ENCODE measurements at regions of chr2 and their contacts with region 1.

Region 1: GRCh38 chr2:218406209-218406948 is 6.7 kb downstream of the CTDSP1 start:
- DNase-seq: peak; percentile 97 to 99
- ATAC-seq: peak; percentile 86 to 92 (median 88)
- H3K4me3 ChIP-seq: peak overlapping the region; percentile 19 to 63 (median 50)
- H3K27ac ChIP-seq: peak overlapping the region; percentile 81 to 95 (median 92)
- H3K4me1 ChIP-seq: peaks cover 27 to 63% (median 50%) of the 10 kb centered on the region in 9 donors
- H3K27me3 ChIP-seq: no peaks in the 10 kb centered on the region
- CTCF ChIP-seq: peak; percentile 55 to 88 (median 78)

Region 2: DNA sequence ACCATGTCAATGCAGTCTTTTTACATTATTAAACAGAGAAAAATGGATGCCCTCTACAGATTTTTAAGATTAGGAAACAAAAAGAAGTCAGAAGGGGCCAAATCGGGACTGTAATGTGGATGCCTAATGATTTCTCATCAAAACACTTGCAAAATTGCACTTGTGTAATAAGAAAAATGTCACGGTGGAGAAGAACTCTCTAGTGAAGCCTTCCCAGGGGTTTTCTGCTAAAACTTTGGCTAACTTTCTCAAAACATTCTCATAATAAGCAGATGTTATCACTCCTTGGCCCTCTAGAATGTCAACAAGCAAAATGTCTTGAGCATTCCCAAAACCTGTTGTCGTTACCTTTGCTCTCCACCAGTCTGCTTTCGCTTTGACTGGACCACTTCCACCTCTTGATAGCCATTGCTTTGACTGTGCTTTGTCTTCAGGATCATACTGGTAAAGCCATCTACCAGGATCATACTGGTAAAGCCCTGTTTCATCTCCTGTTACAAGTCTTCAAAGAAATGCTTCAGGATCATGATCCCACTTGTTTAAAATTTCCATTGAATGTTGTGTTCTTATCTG is 630.4 kb before region 1 on chr2:
- intact Hi-C with region 1: no loop called
- DNase-seq: no peak
- ATAC-seq: no peak
- H3K4me3 ChIP-seq: no peak overlapping the region
- H3K27ac ChIP-seq: no peak overlapping the region
- H3K4me1 ChIP-seq: no peaks in the 10 kb centered on the region
- H3K27me3 ChIP-seq: no peaks in the 10 kb centered on the region
- CTCF ChIP-seq: no peak

Region 3: GRCh38 chr2:218466016-218466521 is 59.7 kb after region 1 on chr2:
- intact Hi-C with region 1: loop called in 8 of 10 experiments (anchors 2 to 5 kb)
- DNase-seq: no peak
- ATAC-seq: peak in 3 of 8 donors; percentile 37 to 53 (median 44)
- H3K4me3 ChIP-seq: no peak overlapping the region
- H3K27ac ChIP-seq: no peak overlapping the region
- H3K4me1 ChIP-seq: peaks cover 0 to 8% (median 0%) of the 10 kb centered on the region in 9 donors
- H3K27me3 ChIP-seq: no peaks in the 10 kb centered on the region
- CTCF ChIP-seq: peak in 8 of 9 donors; percentile 30 to 68 (median 60)

Region 4: GRCh38 chr2:218568190-218569037 is 162.0 kb after region 1 on chr2 and contains the starts of genes CNOT9 and USP37:
- intact Hi-C with region 1: loop called in 1 of 10 experiments (anchors 2 kb)
- DNase-seq: peak; percentile 100
- ATAC-seq: peak; percentile 97 to 99 (median 98)
- H3K4me3 ChIP-seq: peak within 1 kb of the TSS; percentile 61 to 96 (median 84)
- H3K27ac ChIP-seq: peak within 1 kb of the TSS; percentile 68 to 97 (median 94)
- H3K4me1 ChIP-seq: peaks cover 8 to 49% (median 45%) of the 10 kb centered on the region in 9 donors
- H3K27me3 ChIP-seq: no peaks in the 10 kb centered on the region
- CTCF ChIP-seq: no peak
- total RNA-seq, gene CNOT9: 15.7 to 28.2 (median 21.1) TPM
- total RNA-seq, gene USP37: 6.3 to 11.1 (median 8.5) TPM

Region 5: DNA sequence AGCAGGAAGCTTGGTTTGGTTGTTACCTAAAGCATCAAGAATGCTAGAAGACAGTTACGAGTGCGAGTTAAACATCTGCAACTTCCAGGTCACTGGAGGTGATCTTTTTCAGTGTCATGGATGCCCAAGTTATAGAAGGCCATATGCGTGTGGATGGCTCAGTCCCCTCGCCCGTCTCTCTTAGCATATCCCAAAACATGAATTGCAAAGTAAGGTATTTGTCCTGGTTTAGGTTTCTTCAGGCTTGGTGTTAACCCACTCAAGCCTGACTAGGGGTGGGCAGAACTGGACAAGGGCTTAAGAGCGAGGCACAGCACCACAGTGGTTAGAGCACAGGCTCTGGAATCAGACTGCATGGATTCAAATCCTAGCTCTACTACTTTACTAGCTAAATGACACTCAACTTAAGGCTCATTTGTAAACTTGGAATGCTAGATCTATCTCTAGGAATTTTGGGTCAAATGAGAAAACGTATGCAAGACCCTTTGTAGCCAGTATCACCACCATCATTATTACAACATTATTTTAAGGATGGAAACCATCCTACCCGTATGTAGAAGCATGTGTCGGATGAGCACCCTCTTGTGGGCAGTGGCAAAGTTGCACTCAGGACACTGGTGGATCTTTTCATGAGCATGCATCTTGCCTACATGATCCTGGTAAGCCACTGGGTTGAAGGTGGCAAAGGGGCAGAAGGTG is 241.9 kb after region 1 on chr2:
- intact Hi-C with region 1: loop called in 7 of 10 experiments (anchors 5 to 10 kb)
- DNase-seq: peak in 1 of 2 donors; percentile 46
- ATAC-seq: peak; percentile 35 to 72 (median 69)
- H3K4me3 ChIP-seq: no peak overlapping the region
- H3K27ac ChIP-seq: no peak overlapping the region
- H3K4me1 ChIP-seq: peaks cover 0 to 4% (median 0%) of the 10 kb centered on the region in 9 donors
- H3K27me3 ChIP-seq: no peaks in the 10 kb centered on the region
- CTCF ChIP-seq: peak; percentile 52 to 86 (median 77)

Region 6: DNA sequence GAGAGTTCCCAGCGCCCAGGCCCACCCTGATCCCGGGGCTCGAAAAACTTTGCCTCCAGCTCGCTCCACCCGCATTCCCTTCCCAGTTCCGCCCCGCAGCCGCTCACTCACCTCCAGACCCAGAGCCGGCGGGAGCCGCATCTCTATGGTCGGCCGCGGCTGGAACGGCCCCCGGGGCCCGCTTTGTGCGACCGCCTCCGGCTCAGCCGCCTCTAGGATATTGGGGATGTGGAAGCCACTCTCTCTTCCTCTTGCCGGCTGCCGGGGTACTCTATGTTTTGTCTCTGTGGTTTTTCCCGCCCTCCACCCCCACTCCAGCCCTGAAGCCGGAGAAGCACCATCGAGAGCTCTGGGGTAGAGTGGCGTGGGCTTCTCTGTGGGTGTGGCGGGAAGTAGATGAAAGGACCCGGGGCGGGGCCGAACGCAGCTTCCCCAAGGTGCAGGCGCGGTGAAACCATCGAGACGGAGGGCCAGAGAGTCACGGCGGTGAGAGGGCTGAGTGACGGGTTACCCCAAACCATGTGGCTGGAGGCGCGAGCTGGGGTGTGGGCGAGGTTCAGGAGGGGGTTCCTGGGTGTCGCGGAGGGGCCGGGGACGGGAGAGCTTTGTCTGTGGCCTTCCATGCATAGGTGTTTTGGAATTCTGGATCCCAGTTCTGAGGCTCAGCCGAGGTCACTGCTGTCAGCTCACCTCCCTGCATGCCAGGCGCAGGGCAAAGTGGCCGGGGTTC is 253.0 kb after region 1 on chr2 and contains the starts of genes BCS1L and ZNF142:
- intact Hi-C with region 1: loop called in 3 of 10 experiments (anchors 5 to 10 kb)
- DNase-seq: peak; percentile 92 to 96
- ATAC-seq: peak; percentile 91 to 98 (median 97)
- H3K4me3 ChIP-seq: peak within 1 kb of the TSS; percentile 79 to 97 (median 92)
- H3K27ac ChIP-seq: peak within 1 kb of the TSS; percentile 54 to 88 (median 81)
- H3K4me1 ChIP-seq: peaks cover 9 to 43% (median 32%) of the 10 kb centered on the region in 9 donors
- H3K27me3 ChIP-seq: no peaks in the 10 kb centered on the region
- CTCF ChIP-seq: no peak
- total RNA-seq, gene BCS1L: 34.8 to 53.8 (median 44.6) TPM
- total RNA-seq, gene ZNF142: 17.9 to 29.5 (median 22.9) TPM